Activated T-helper 2 cell treated with anti-CD3 and anti-CD28 coated beads, Interferon-gamma antibody, Interleukin-2, Interleukin-4, amounts not matched to agents 10 μg/mL and 5 μg/mL and 100 μg/mL, durations not matched to agents 14 hours and 24 hours and 36 hours (primary cell): ENCODE measurements at regions of chr5 and their contacts with region 1.

Region 1: DNA sequence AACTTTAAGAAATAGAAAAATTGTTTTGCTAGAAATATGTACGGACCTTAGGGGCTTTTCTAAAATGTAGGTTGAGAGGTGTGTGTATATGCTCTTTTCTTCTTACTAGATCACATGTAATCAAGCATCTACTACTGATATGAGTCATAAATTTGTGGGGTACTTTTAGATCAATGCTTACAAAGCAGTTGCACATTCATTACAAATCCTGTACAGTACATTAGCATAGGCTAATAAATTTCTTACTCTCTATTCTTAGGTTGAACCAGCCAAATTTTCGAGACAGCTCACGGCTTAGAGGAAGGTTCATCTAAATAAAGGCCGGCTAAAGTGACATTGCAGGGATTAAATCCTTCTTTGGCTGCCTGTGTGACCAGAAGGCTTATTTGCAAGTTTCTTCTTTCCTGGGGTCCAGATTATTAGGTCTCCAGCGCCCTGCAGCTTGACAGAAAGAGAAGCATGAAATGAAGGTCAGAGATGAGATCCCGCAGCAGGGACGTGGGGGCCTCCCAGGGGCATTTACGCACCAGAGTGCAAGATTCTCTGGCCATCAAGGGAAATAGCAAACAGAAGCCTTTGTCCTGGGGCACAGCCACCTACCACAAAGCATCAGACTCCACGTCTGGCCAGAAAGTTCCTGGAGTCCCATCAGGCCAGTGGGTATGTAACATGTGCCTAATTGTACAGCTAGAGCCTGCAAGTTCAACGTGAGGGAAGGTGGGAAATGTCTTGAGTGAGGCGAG is 53.0 kb downstream of the NIM1K start:
- DNase-seq: no peak
- H3K4me3 Mint-ChIP-seq: no peak overlapping the region
- H3K27ac Mint-ChIP-seq: no peak overlapping the region
- H3K4me1 Mint-ChIP-seq: peaks cover 42% of the 10 kb centered on the region
- H3K27me3 Mint-ChIP-seq: peaks cover 10% of the 10 kb centered on the region

Region 2: DNA sequence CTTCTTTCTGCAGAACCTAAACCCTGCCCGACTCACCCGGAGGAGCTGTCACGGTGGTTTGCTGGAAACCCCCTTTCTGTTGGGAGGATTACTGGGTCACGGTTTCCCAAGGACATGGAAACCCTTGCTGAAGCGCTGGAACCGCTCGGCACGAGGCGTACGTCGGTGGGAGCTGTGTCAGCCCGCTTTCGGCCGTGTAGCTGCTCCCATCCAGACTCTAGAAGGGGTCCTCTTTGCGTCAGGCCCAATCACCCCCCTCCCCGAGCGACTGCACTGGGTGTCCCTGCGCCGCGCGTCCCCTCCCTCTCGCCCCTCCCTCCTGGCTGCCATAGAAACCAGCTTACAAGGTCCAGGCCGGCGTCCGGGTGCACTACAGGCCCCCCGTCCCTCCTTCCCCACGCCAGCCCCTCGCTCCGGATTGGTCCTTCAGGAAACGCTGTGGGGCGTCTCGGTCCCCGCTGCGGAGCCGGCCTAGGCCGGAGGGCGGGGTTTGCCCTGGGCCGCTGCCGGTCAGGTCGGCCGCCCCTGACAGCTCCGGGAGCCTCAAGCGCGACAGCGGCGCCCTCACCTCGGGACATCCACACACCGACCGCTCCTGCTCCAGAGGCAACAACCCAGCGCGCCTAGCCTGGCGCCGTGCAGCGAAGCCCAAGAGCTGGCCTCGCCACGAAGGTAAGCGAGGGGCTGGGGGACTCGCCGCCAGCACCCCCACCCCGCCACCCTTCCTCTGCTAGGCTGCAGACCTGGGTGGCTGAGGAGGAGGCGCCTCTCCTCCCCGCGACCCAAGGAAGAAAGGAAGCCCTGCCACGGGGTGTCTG is 53.0 kb before region 1 on chr5 and contains the start of gene NIM1K:
- intact Hi-C with region 1: loop called (anchors 5 kb)
- DNase-seq: peak; percentile 35
- H3K4me3 Mint-ChIP-seq: peak within 1 kb of the TSS; percentile 82
- H3K27ac Mint-ChIP-seq: peak within 1 kb of the TSS; percentile 59
- H3K4me1 Mint-ChIP-seq: peaks cover 24% of the 10 kb centered on the region
- H3K27me3 Mint-ChIP-seq: peaks cover 10% of the 10 kb centered on the region
- total RNA-seq, gene NIM1K: 0.76 and 1.1 TPM in 2 replicates

Region 3: GRCh38 chr5:43281840-43282658 is 37.1 kb after region 1 on chr5:
- intact Hi-C with region 1: loop called (anchors 5 kb)
- DNase-seq: no peak
- H3K4me3 Mint-ChIP-seq: no peak overlapping the region
- H3K27ac Mint-ChIP-seq: no peak overlapping the region
- H3K4me1 Mint-ChIP-seq: peaks cover 7% of the 10 kb centered on the region
- H3K27me3 Mint-ChIP-seq: no peaks in the 10 kb centered on the region